WTC11 (cell line): ENCODE measurements at regions of chr1 and their contacts with region 1.

Region 1: DNA sequence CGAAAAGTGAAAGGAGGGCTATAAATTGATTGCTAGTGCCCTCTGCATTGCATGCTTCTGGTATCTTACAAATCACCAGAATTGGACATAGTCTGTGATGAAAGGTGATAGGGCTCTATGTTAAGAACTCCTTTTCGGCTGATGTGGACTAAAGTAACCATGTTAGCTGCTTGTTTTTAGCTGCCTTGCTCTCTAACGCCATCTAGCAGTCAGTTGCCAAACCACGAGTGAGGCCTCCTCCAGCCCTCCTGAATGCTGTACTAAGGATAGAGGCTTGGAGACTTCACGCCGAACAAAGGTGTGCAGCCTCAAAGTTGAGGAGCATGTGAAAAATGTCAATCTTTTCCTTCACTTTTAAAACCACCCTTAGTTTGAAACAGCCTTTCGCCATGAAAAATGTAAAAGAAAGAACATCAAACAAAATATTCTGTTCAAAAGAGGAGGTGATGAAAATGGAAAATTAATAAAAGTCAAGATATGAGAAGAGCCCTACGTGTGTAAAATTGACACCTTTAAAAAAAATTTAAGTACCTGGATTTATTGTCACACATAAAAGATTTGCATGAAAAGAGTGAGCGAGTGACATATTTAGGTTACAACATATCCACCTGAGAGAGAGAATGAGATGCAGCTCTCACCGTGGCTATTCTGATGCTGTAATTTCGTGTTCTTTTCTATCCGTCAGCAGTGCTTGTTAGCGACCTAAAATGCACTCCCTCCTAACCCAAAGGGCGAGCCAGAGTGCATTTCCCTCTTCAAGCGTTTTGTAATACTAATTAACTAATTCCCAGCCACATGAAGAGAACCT is 8.1 kb downstream of the LRRC53 start:
- DNase-seq: peak; percentile 81
- ATAC-seq: peak; percentile 86
- H3K4me3 Mint-ChIP-seq: peak overlapping the region; percentile 50
- H3K27ac Mint-ChIP-seq: peak overlapping the region; percentile 81; the same call in 1 of the 2 replicates
- H3K4me1 Mint-ChIP-seq: peaks cover 41% of the 10 kb centered on the region
- H3K27me3 Mint-ChIP-seq: no peaks in the 10 kb centered on the region
- CTCF ChIP-seq: peak; percentile 62

Region 2: GRCh38 chr1:74197657-74198552 is 306.4 kb before region 1 on chr1 and contains the starts of genes FPGT and LRRIQ3:
- CTCF ChIA-PET with region 1: no interaction called
- POLR2A ChIA-PET with region 1: no interaction called
- DNase-seq: peak; percentile 93
- ATAC-seq: peak; percentile 99
- H3K4me3 Mint-ChIP-seq: peak within 1 kb of the TSS; percentile 85
- H3K27ac Mint-ChIP-seq: no peak within 1 kb of the TSS
- H3K4me1 Mint-ChIP-seq: peaks cover 8% of the 10 kb centered on the region
- H3K27me3 Mint-ChIP-seq: peaks cover 4% of the 10 kb centered on the region
- CTCF ChIP-seq: no peak
- total RNA-seq, gene FPGT: 3.9 to 5.0 TPM (median 4.7 TPM) in 3 replicates
- total RNA-seq, gene LRRIQ3: 0.21 to 1.1 TPM (median 0.46 TPM) in 3 replicates

Region 3: GRCh38 chr1:74485622-74486021 is 18.7 kb before region 1 on chr1:
- CTCF ChIA-PET with region 1: interaction called, 19 read pairs
- POLR2A ChIA-PET with region 1: no interaction called
- DNase-seq: no peak
- ATAC-seq: no peak
- H3K4me3 Mint-ChIP-seq: no peak overlapping the region
- H3K27ac Mint-ChIP-seq: no peak overlapping the region
- H3K4me1 Mint-ChIP-seq: peaks cover 34% of the 10 kb centered on the region
- H3K27me3 Mint-ChIP-seq: peaks cover under 1% of the 10 kb centered on the region; the same call in 1 of the 2 replicates
- CTCF ChIP-seq: no peak

Region 4: GRCh38 chr1:74522148-74522547 is 17.8 kb after region 1 on chr1:
- CTCF ChIA-PET with region 1: interaction called, 15 read pairs
- POLR2A ChIA-PET with region 1: no interaction called
- DNase-seq: peak; percentile 56
- ATAC-seq: peak; percentile 87
- H3K4me3 Mint-ChIP-seq: peak overlapping the region; percentile 42
- H3K27ac Mint-ChIP-seq: peak overlapping the region; percentile 90
- H3K4me1 Mint-ChIP-seq: peaks cover 53% of the 10 kb centered on the region
- H3K27me3 Mint-ChIP-seq: no peaks in the 10 kb centered on the region
- CTCF ChIP-seq: no peak

Region 5: GRCh38 chr1:74726063-74726462 is 221.7 kb after region 1 on chr1:
- CTCF ChIA-PET with region 1: no interaction called
- POLR2A ChIA-PET with region 1: no interaction called
- DNase-seq: no peak
- ATAC-seq: no peak
- H3K4me3 Mint-ChIP-seq: no peak overlapping the region
- H3K27ac Mint-ChIP-seq: no peak overlapping the region
- H3K4me1 Mint-ChIP-seq: peaks cover 12% of the 10 kb centered on the region
- H3K27me3 Mint-ChIP-seq: no peaks in the 10 kb centered on the region
- CTCF ChIP-seq: no peak